IMR-90 (cell line): ENCODE measurements at regions of chr1 and their contacts with region 1.

Region 1: DNA sequence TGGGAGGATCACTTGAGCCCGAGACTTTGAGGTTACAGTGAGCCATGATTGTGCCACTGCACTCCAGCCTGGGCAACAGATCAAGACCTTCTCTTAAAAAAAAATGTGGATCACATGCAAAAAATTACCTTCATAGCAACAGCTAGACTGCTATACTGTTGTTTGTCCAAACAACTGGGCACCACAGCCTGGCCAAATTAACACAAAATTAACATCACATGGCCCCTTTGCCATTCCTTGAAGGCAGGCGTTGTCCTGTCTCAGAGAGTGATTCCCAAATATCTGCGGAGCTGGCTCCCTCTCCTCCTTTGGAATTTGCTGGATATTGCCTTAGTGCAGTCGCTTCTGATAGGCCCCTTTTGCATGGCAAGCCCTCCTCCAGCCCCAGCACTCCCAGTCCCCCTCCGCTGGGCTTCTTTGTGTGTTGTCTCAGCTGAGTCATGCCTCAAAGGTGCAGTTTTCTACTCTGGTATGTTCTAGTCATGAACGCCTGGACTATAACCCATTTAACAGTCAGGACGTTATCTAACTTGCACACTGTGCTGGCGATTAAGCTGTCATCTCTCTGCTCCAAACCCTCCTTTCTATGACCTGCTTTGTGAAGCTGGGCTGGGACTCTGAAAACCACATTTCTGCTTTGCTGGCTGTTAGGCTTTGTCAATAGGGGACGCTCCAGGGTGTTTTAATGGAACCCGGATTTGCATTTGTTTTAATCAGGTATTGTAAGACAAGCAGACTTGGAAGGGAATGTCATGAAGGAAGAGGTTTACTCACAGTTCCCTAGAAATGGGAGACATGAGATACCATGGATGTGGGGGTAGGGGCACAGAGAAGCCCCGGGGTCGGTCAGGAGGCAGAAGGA is 20.1 kb upstream of the HPCAL4 start:
- DNase-seq: peak; percentile 30
- ATAC-seq: peak; percentile 54
- H3K4me3 ChIP-seq: no peak overlapping the region
- H3K27ac ChIP-seq: no peak overlapping the region
- H3K4me1 ChIP-seq: no peaks in the 10 kb centered on the region
- H3K27me3 ChIP-seq: peaks cover 67% of the 10 kb centered on the region
- CTCF ChIP-seq: no peak
- POLR2A ChIP-seq: no peak
- RAD21 ChIP-seq: no peak

Region 2: DNA sequence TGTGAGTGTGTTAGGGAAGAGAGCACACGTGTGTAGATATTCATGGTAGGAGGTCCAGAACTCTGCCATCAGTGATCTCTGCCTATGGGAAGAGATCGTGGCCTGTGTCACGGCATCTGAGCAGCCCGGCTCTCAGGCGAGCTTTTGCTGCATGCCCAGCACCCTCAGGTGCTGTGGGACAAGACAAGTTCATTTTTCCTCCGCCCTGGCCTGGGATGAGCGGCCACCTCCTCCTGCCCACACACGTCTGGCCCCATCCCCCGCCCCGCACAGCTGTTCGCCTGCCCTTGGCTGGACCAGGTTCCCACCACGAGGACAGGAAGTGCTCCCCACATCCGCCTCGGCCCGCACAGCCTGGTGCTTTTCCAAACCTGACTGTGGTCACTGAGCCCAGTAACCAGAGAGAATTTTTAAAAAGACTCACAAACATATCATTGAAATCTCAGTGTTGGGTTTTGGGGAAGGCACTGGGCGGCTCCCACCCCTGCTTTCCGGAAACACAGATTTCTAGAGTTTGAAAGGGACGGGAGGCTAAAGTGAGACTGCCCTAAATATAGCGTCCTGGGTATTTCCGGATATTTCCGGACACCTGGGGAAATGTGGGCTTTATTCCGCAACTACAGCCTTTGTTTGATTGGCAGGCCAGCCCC is 201.8 kb before region 1 on chr1:
- CTCF ChIA-PET with region 1: no interaction called
- POLR2A ChIA-PET with region 1: no interaction called
- dilution Hi-C with region 1: no loop called
- in situ Hi-C with region 1: loop called (anchors 10 kb)
- intact Hi-C with region 1: no loop called
- DNase-seq: peak; percentile 38
- ATAC-seq: no peak
- H3K4me3 ChIP-seq: no peak overlapping the region
- H3K27ac ChIP-seq: no peak overlapping the region
- H3K4me1 ChIP-seq: no peaks in the 10 kb centered on the region; the same call in 1 of the 2 replicates
- H3K27me3 ChIP-seq: peaks cover 3% of the 10 kb centered on the region; the same call in 1 of the 2 replicates
- CTCF ChIP-seq: no peak
- POLR2A ChIP-seq: no peak
- RAD21 ChIP-seq: no peak

Region 3: DNA sequence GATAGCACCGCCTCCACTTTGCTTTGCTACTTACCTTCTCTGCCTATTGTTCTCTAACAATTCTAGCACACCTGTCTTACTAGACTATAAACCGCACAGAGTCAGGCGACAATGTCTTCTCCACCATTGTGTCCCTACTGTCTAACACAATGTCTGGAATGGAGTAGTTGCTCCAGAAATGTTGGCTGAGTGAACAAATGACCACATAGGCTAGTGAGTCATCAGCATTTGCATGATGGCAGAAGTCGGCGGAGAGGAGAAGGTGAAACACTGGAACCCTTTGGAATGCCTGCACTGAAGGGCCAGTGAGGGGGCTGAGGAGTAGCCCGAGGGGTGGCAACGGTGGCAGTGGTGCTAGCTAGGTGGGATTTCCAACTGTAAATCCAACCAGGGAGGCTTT is 120.8 kb before region 1 on chr1:
- CTCF ChIA-PET with region 1: no interaction called
- POLR2A ChIA-PET with region 1: no interaction called
- dilution Hi-C with region 1: no loop called
- in situ Hi-C with region 1: loop called (anchors 10 kb)
- intact Hi-C with region 1: no loop called
- DNase-seq: peak; percentile 53
- ATAC-seq: peak; percentile 35; the same call in 1 of the 2 replicates
- H3K4me3 ChIP-seq: no peak overlapping the region
- H3K27ac ChIP-seq: no peak overlapping the region
- H3K4me1 ChIP-seq: no peaks in the 10 kb centered on the region
- H3K27me3 ChIP-seq: peaks cover 27% of the 10 kb centered on the region
- CTCF ChIP-seq: no peak
- POLR2A ChIP-seq: no peak
- RAD21 ChIP-seq: no peak

Region 4: GRCh38 chr1:39672551-39672947 is 38.8 kb before region 1 on chr1:
- CTCF ChIA-PET with region 1: no interaction called
- POLR2A ChIA-PET with region 1: no interaction called
- dilution Hi-C with region 1: no loop called
- in situ Hi-C with region 1: no loop called
- intact Hi-C with region 1: loop called (anchors 5 kb)
- DNase-seq: no peak
- ATAC-seq: peak; percentile 68
- H3K4me3 ChIP-seq: no peak overlapping the region
- H3K27ac ChIP-seq: no peak overlapping the region
- H3K4me1 ChIP-seq: no peaks in the 10 kb centered on the region; the same call in 1 of the 2 replicates
- H3K27me3 ChIP-seq: peaks cover 76% of the 10 kb centered on the region
- CTCF ChIP-seq: peak; percentile 38; the same call in 1 of the 2 replicates
- POLR2A ChIP-seq: no peak
- RAD21 ChIP-seq: no peak